HepG2 (cell line): ENCODE measurements at regions of chr12 and their contacts with region 1.

Region 1: DNA sequence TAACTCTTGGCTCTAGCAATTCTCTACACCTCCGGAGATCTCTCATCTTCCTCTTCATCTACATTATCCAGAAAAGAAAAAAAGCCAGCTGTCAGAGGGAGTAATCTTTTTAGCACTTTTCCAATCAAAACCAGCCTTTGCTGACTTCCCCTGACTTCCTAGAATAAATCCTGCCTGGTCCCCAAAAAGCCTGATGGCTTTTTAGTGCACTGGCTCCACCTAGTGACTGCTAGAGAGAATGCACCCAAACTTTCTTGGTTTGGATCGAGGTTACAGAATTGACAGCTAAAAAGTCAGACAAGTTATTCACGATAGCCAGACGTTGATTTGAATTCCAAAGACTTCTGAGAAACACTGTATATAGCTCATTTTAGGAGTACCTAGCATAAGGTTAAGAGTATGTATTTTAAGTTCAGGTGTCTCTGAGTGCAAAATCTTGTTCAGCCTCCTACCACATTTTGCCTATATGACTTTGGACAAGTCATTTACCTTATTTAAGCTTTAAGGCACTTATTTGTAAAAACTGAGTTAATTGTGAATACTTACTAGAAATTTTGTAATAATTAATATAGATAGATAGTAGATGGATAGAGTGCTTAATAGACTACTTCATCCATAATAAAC is 185.7 kb upstream of the GRIN2B start:
- DNase-seq: peak; percentile 30
- ATAC-seq: peak; percentile 29; the same call in 1 of the 3 replicates
- H3K4me3 ChIP-seq: no peak overlapping the region
- H3K27ac ChIP-seq: no peak overlapping the region
- H3K4me1 ChIP-seq: no peaks in the 10 kb centered on the region
- H3K27me3 ChIP-seq: no peaks in the 10 kb centered on the region
- CTCF ChIP-seq: peak; percentile 83
- EP300 ChIP-seq: no peak
- POLR2A ChIP-seq: no peak
- RAD21 ChIP-seq: peak; percentile 59

Region 2: GRCh38 chr12:13011098-13011497 is 1156.0 kb before region 1 on chr12:
- CTCF ChIA-PET with region 1: no interaction called
- POLR2A ChIA-PET with region 1: no interaction called
- in situ Hi-C with region 1: no loop called
- intact Hi-C with region 1: loop called (anchors 5 kb)
- DNase-seq: no peak
- ATAC-seq: no peak
- H3K4me3 ChIP-seq: no peak overlapping the region
- H3K27ac ChIP-seq: no peak overlapping the region
- H3K4me1 ChIP-seq: no peaks in the 10 kb centered on the region
- H3K27me3 ChIP-seq: no peaks in the 10 kb centered on the region
- CTCF ChIP-seq: no peak
- EP300 ChIP-seq: no peak
- POLR2A ChIP-seq: no peak
- RAD21 ChIP-seq: no peak

Region 3: GRCh38 chr12:13278249-13278787 is 888.8 kb before region 1 on chr12:
- CTCF ChIA-PET with region 1: interaction called, 3 read pairs
- POLR2A ChIA-PET with region 1: no interaction called
- in situ Hi-C with region 1: loop called (anchors 10 kb)
- intact Hi-C with region 1: loop called (anchors 5 kb)
- DNase-seq: peak; percentile 26
- ATAC-seq: peak; percentile 99
- H3K4me3 ChIP-seq: peak overlapping the region in 1 of 3 experiments; percentile 34; a peak in 1 of 6 replicates
- H3K27ac ChIP-seq: no peak overlapping the region
- H3K4me1 ChIP-seq: no peaks in the 10 kb centered on the region
- H3K27me3 ChIP-seq: peaks cover 7 to 44% of the 10 kb centered on the region in 2 experiments; a peak in 3 of 5 replicates
- CTCF ChIP-seq: peak; percentile 88
- EP300 ChIP-seq: no peak
- POLR2A ChIP-seq: no peak
- RAD21 ChIP-seq: peak; percentile 43; the same call in 1 of the 2 replicates

Region 4: DNA sequence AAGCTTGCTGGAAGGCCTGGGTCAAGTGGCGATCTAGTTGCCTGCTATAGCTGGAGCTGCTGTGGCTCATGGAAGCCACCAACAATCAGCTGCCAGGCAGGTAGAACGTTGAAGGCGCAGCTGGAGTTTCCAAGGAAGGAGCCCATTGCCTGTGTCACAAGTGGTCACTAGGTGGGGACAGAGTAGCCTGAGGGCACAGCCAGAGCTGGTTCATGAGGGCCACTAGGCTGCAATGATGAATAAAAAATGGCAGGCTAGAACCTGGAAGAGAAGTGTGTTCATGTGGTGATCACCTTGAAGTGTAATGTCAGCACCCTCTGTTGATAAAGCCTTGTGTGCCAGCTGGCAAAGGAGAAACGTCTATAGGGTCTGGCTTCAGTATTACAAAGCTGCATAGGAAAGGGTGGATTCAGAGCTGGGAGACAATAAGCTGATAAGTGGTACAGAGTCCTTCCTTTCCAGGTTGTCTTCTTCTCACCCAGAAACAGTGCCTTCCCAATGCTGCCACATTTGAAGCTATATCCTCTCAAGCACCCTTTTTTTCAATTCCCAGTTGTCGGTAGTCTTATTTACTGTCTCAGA is 804.8 kb before region 1 on chr12:
- CTCF ChIA-PET with region 1: no interaction called
- POLR2A ChIA-PET with region 1: no interaction called
- in situ Hi-C with region 1: loop called (anchors 25 kb)
- intact Hi-C with region 1: loop called (anchors 5 kb)
- DNase-seq: peak; percentile 47
- ATAC-seq: peak; percentile 99
- H3K4me3 ChIP-seq: no peak overlapping the region
- H3K27ac ChIP-seq: no peak overlapping the region
- H3K4me1 ChIP-seq: no peaks in the 10 kb centered on the region
- H3K27me3 ChIP-seq: no peaks in the 10 kb centered on the region; a peak in 1 of 5 replicates
- CTCF ChIP-seq: peak; percentile 87
- EP300 ChIP-seq: no peak
- POLR2A ChIP-seq: no peak
- RAD21 ChIP-seq: peak; percentile 49

Region 5: GRCh38 chr12:13744561-13744960 is 422.6 kb before region 1 on chr12:
- CTCF ChIA-PET with region 1: no interaction called
- POLR2A ChIA-PET with region 1: no interaction called
- in situ Hi-C with region 1: loop called (anchors 5 kb)
- intact Hi-C with region 1: no loop called
- DNase-seq: no peak
- ATAC-seq: no peak
- H3K4me3 ChIP-seq: no peak overlapping the region
- H3K27ac ChIP-seq: no peak overlapping the region
- H3K4me1 ChIP-seq: no peaks in the 10 kb centered on the region
- H3K27me3 ChIP-seq: no peaks in the 10 kb centered on the region; a peak in 2 of 5 replicates
- CTCF ChIP-seq: no peak
- EP300 ChIP-seq: no peak
- POLR2A ChIP-seq: no peak
- RAD21 ChIP-seq: no peak

Region 6: DNA sequence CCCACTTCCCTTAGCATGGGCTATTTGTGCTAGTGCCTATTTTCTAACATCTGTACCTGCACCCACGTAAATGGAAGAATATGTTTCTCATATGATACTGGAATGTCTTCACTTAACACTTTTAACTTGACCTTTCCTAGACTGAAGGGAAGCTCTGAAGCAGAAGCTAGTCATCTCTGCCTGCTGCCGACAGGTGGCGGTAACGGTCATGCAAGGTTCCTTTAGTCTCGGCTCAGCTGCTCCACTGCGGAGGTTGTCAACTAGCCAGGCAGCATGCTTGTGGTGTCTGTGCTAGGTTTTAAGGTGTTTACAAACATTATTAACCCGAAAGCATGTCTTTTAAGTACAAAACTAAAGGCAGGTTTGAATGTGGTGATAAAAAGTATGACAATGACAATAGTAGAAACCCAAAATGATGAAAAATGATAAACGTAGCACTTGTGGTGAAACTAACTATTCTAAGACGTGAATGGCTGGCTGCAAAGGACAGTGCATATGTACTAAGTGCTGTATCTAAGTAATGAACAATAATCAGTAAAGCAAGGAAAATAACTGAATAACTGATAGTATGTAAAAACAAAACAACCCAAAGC is 302.9 kb before region 1 on chr12:
- CTCF ChIA-PET with region 1: interaction called, 11 read pairs
- POLR2A ChIA-PET with region 1: no interaction called
- in situ Hi-C with region 1: loop called (anchors 5 kb)
- intact Hi-C with region 1: loop called (anchors 1 kb)
- DNase-seq: peak; percentile 48
- ATAC-seq: peak; percentile 94
- H3K4me3 ChIP-seq: no peak overlapping the region
- H3K27ac ChIP-seq: no peak overlapping the region
- H3K4me1 ChIP-seq: no peaks in the 10 kb centered on the region
- H3K27me3 ChIP-seq: no peaks in the 10 kb centered on the region
- CTCF ChIP-seq: peak; percentile 90
- EP300 ChIP-seq: no peak
- POLR2A ChIP-seq: no peak
- RAD21 ChIP-seq: 0 out of 2 replicates have a peak, but pooled peaks have one; percentile 45

Region 7: GRCh38 chr12:14111230-14111865 is 55.8 kb before region 1 on chr12:
- CTCF ChIA-PET with region 1: interaction called, 4 read pairs
- POLR2A ChIA-PET with region 1: no interaction called
- in situ Hi-C with region 1: no loop called
- intact Hi-C with region 1: loop called (anchors 1 kb)
- DNase-seq: peak; percentile 1
- ATAC-seq: peak; percentile 86
- H3K4me3 ChIP-seq: no peak overlapping the region
- H3K27ac ChIP-seq: no peak overlapping the region
- H3K4me1 ChIP-seq: no peaks in the 10 kb centered on the region
- H3K27me3 ChIP-seq: no peaks in the 10 kb centered on the region
- CTCF ChIP-seq: peak; percentile 52
- EP300 ChIP-seq: no peak
- POLR2A ChIP-seq: no peak
- RAD21 ChIP-seq: no peak

Region 8: DNA sequence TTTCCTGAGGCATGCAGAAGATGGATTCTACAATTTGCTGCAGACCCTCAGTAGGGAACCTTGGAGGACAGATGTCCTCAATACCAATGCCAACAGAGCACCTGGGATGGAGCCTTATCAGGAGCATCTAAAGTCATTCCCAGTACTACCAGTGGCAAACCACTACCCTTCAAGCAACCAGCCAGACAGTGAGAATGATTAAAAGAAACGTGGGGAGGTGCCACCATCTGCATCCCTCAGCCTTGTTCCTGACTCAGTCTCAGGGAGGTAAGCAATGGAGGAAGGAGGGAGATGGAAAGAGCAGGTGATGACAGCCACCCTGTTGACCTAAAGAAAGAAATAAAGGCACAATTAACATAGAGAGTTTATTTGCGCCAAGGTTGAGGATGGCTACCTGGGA is 10.5 kb before region 1 on chr12:
- CTCF ChIA-PET with region 1: no interaction called
- POLR2A ChIA-PET with region 1: no interaction called
- in situ Hi-C with region 1: no loop called
- intact Hi-C with region 1: no loop called
- DNase-seq: no peak
- ATAC-seq: no peak
- H3K4me3 ChIP-seq: no peak overlapping the region
- H3K27ac ChIP-seq: no peak overlapping the region
- H3K4me1 ChIP-seq: no peaks in the 10 kb centered on the region
- H3K27me3 ChIP-seq: no peaks in the 10 kb centered on the region
- CTCF ChIP-seq: no peak
- EP300 ChIP-seq: no peak
- POLR2A ChIP-seq: no peak
- RAD21 ChIP-seq: no peak

Region 9: DNA sequence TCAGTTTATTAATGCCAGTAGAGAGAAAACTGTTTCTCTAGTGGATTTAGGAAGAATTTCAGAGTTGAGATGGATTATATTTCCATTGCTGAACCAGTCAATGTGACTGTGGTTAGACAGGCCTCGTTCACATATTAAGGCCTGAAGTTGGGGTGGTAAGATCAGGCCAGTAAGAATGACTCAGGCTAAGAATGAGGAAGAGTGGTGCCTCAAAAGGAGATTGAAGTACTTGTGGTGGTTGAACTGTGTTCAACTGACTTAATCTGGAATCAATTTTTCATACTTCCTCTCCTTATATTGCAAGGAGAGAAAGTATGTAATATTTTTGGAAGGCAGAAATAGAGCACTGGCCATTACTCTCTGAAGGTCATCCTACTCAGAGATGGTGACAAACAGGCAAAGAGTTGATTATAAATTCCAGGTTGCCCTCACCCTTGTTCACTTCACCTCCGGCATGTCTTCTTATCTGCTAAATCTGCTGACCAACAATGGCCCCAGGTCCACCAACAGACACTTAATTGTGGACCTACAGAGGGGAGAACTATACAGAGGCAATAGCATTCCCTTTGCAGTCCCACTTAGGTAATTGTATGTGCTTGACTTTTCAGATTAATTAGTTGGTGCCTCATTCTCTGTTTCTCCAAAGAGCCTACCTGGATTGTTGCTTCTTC is 160.7 kb after region 1 on chr12:
- CTCF ChIA-PET with region 1: no interaction called
- POLR2A ChIA-PET with region 1: no interaction called
- in situ Hi-C with region 1: no loop called
- intact Hi-C with region 1: no loop called
- DNase-seq: no peak
- ATAC-seq: no peak
- H3K4me3 ChIP-seq: no peak overlapping the region
- H3K27ac ChIP-seq: no peak overlapping the region
- H3K4me1 ChIP-seq: no peaks in the 10 kb centered on the region
- H3K27me3 ChIP-seq: no peaks in the 10 kb centered on the region
- CTCF ChIP-seq: no peak
- EP300 ChIP-seq: no peak
- POLR2A ChIP-seq: no peak
- RAD21 ChIP-seq: no peak

Region 10: GRCh38 chr12:14417715-14418114 is 250.6 kb after region 1 on chr12:
- CTCF ChIA-PET with region 1: no interaction called
- POLR2A ChIA-PET with region 1: no interaction called
- in situ Hi-C with region 1: no loop called
- intact Hi-C with region 1: no loop called
- DNase-seq: peak; percentile 33
- ATAC-seq: peak; percentile 29; the same call in 1 of the 3 replicates
- H3K4me3 ChIP-seq: no peak overlapping the region
- H3K27ac ChIP-seq: no peak overlapping the region
- H3K4me1 ChIP-seq: no peaks in the 10 kb centered on the region
- H3K27me3 ChIP-seq: no peaks in the 10 kb centered on the region
- CTCF ChIP-seq: no peak
- EP300 ChIP-seq: no peak
- POLR2A ChIP-seq: no peak
- RAD21 ChIP-seq: no peak